Activated CD8-positive, alpha-beta T cell treated with anti-CD3 and anti-CD28 coated beads for 36 hours (primary cell): ENCODE measurements at regions of chr19 and their contacts with region 1.

Region 1: GRCh38 chr19:19643158-19644053 is at the start of gene GMIP:
- DNase-seq: peak; percentile 93
- ATAC-seq: peak; percentile 88
- H3K4me3 Mint-ChIP-seq: peak within 1 kb of the TSS; percentile 96
- H3K27ac Mint-ChIP-seq: peak within 1 kb of the TSS; percentile 98
- H3K4me1 Mint-ChIP-seq: peaks cover 9% of the 10 kb centered on the region
- H3K27me3 Mint-ChIP-seq: no peaks in the 10 kb centered on the region
- CTCF ChIP-seq: peak; percentile 90
- total RNA-seq, gene GMIP: 57.3 to 59.9 TPM

Region 2: DNA sequence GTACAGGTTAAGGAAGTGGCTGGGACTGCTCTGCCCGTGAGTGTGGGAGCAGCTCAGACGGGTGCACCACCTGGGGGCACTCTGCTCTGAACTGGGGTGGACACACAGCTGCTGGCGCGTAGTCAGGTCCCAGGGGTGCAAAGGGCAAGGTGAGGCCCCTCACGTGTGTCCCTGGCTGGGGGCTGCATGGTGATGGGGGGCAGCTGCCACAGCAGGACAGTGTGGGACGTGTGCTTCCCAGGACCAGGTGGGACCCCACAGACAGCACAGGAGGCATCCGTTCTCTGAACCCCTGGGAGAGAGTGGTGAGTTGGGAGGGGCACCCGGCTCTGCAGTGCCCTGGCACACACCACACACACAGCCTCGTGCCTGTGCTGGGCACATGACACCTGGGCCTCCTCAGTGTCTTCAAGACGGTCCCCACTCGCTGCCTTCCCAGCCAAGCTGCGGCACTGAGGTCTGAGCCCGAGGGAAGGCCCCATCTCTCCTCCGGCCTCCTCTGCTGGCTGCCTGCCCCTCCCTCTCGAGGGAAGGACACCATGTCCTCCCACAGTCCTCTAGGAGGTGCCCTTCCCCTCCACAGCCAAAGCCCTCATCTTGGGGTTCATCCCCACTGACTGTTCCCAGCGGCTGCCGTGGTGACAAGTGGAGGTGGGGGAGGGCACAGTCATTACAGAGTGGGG is 80.6 kb before region 1 on chr19:
- CTCF ChIA-PET with region 1: interaction called, 10 read pairs
- POLR2A ChIA-PET with region 1: no interaction called
- intact Hi-C with region 1: no loop called
- DNase-seq: peak; percentile 46
- ATAC-seq: peak; percentile 84
- H3K4me3 Mint-ChIP-seq: no peak overlapping the region
- H3K27ac Mint-ChIP-seq: no peak overlapping the region
- H3K4me1 Mint-ChIP-seq: no peaks in the 10 kb centered on the region
- H3K27me3 Mint-ChIP-seq: no peaks in the 10 kb centered on the region
- CTCF ChIP-seq: no peak

Region 3: GRCh38 chr19:19597809-19598306 is 45.5 kb before region 1 on chr19:
- CTCF ChIA-PET with region 1: interaction called, 3 read pairs
- POLR2A ChIA-PET with region 1: no interaction called
- intact Hi-C with region 1: loop called (anchors 5 kb)
- DNase-seq: peak; percentile 81
- ATAC-seq: peak; percentile 69
- H3K4me3 Mint-ChIP-seq: peak overlapping the region; percentile 74
- H3K27ac Mint-ChIP-seq: peak overlapping the region; percentile 100
- H3K4me1 Mint-ChIP-seq: peaks cover 70% of the 10 kb centered on the region
- H3K27me3 Mint-ChIP-seq: no peaks in the 10 kb centered on the region
- CTCF ChIP-seq: no peak

Region 4: DNA sequence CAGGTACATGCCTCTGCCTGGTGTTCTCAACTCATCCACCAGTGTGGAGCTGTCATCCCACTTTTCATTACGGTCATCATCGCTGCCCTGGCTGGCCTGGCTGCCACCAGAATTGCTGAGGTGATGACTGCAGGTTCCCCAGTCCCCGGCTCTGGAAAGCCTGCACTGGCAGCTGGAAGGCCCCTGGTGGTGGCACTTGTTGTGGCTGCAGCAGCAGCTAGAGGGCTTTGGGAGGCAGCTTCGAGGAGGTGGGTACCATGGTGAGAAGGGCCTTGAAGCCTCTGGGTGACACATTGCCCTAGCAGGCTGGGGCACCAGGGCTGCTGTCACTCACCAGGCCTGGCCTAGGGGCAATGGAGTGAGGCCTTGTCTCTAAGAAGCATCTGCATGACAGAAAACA is 114.8 kb after region 1 on chr19:
- CTCF ChIA-PET with region 1: no interaction called
- POLR2A ChIA-PET with region 1: no interaction called
- intact Hi-C with region 1: no loop called
- DNase-seq: no peak
- ATAC-seq: no peak
- H3K4me3 Mint-ChIP-seq: no peak overlapping the region
- H3K27ac Mint-ChIP-seq: no peak overlapping the region
- H3K4me1 Mint-ChIP-seq: no peaks in the 10 kb centered on the region
- H3K27me3 Mint-ChIP-seq: no peaks in the 10 kb centered on the region
- CTCF ChIP-seq: no peak